Mammary epithelial cell (primary cell): ENCODE measurements at regions of chr17 and their contacts with region 1.

Region 1: GRCh38 chr17:80101011-80101945 is at the start of gene GAA:
- DNase-seq: peak; percentile 65
- H3K4me3 ChIP-seq: peak within 1 kb of the TSS; percentile 50 to 98 (median 86)
- H3K27ac ChIP-seq: peak within 1 kb of the TSS; percentile 51
- H3K4me1 ChIP-seq: peaks cover 32% of the 10 kb centered on the region
- H3K27me3 ChIP-seq: no peaks in the 10 kb centered on the region
- CTCF ChIP-seq: peak; percentile 52 to 64
- total RNA-seq, gene GAA: 32.2 to 230 TPM

Region 2: GRCh38 chr17:80124351-80124981 is 23.2 kb after region 1 on chr17:
- CTCF ChIA-PET with region 1: interaction called, 8 read pairs
- dilution Hi-C with region 1: no loop called
- in situ Hi-C with region 1: no loop called
- intact Hi-C with region 1: loop called (anchors 1 kb)
- DNase-seq: peak; percentile 76
- H3K4me3 ChIP-seq: no peak overlapping the region
- H3K27ac ChIP-seq: peak overlapping the region; percentile 16
- H3K4me1 ChIP-seq: peaks cover 26% of the 10 kb centered on the region
- H3K27me3 ChIP-seq: no peaks in the 10 kb centered on the region
- CTCF ChIP-seq: peak; percentile 33 to 56

Region 3: DNA sequence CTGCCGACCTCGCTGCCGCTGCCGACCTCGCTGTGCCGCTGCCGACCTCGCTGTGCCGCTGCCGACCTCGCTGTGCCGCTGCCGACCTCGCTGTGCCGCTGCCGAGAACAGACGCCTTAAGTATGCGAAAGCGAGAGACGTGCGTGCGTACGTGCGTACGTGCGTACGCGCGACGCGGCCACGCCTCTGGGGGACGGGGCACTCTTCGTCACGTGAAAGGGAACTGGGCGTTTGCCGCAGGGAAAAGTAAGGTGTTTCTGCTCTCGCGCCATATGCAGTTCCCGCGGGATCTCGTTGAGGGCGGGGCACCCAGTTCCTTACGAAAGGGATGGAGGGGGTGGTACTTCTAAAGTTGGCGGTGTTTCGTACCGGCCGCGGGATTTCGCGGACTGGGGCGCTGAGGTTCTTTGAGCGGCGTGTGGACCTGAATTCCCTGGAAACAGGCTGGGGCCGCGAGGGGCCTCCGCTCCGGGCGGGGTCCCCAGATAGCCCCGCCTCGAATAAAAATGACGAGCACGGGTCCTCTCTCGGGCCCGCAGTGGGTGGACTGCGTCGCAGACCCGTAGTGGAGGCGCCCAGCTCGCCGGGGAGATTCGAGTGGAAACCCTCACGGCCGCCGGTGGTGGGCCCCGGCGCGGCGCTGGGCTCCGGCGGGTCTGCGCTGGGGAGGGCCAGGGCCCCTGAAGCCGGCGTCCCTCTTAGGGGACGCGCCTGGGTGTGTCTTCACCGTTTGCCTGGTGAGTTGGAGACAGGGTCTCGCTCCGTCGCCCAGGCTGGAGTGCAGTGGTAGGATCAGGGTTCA is 46.0 kb after region 1 on chr17 and contains the start of gene EIF4A3:
- CTCF ChIA-PET with region 1: interaction called, 5 read pairs
- dilution Hi-C with region 1: loop called (anchors 5 kb)
- in situ Hi-C with region 1: no loop called
- intact Hi-C with region 1: loop called (anchors 1 kb)
- DNase-seq: peak; percentile 98
- H3K4me3 ChIP-seq: peak within 1 kb of the TSS; percentile 78 to 96 (median 82)
- H3K27ac ChIP-seq: peak within 1 kb of the TSS; percentile 81
- H3K4me1 ChIP-seq: peaks cover 14% of the 10 kb centered on the region
- H3K27me3 ChIP-seq: no peaks in the 10 kb centered on the region
- CTCF ChIP-seq: peak in 1 of 2 donors; percentile 6
- total RNA-seq, gene EIF4A3: 79.7 to 86.4 TPM

Region 4: GRCh38 chr17:80219013-80219762 is 117.9 kb after region 1 on chr17:
- CTCF ChIA-PET with region 1: interaction called, 3 read pairs
- dilution Hi-C with region 1: no loop called
- in situ Hi-C with region 1: no loop called
- intact Hi-C with region 1: loop called (anchors 1 kb)
- DNase-seq: peak; percentile 82
- H3K4me3 ChIP-seq: peak overlapping the region; percentile 27 to 70 (median 59)
- H3K27ac ChIP-seq: no peak overlapping the region
- H3K4me1 ChIP-seq: peaks cover 12% of the 10 kb centered on the region
- H3K27me3 ChIP-seq: no peaks in the 10 kb centered on the region
- CTCF ChIP-seq: no peak

Region 5: DNA sequence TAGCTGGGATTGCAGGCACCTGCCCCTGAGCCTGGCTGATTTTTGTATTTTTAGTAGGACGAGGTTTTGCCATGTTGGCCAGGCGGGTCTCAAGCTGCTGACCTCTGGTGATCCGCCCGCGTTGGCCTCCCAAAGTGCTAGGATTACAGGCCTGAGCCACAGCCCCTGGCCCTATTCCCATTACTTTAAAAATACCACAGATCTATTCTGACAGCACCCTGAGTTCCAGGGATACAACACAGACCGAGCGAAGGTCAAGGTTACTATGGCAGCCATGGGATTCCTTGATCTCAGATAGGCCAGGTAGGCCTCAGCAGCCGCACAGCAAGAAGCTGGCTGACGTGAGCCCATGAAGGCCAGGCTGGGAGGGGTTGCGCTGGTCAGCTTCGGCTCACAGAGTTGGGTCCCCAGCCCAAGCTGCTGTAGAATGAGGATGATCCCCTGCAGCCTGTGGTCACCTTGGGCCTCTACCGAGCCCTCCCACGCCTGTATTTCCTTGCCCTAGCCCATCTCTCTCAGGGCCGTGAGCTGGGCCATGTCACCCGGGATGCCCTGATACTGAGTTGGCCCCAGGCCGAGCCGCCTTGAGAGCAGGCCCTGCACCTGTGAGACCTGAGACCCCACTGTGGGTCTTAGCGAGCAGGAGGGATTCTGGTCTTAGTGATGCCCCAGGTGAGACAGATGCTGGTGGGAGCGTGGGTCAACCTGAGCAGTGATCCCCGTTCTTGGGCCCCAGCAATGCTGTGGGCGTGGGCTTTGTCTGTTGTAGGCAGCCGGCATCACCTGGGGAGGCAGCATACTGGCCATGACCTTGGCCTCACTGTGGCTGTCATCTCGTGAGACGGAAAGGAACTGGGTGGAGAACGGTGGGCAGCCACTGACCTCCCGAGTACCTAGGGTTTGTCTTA is 142.5 kb after region 1 on chr17:
- CTCF ChIA-PET with region 1: no interaction called
- dilution Hi-C with region 1: no loop called
- in situ Hi-C with region 1: no loop called
- intact Hi-C with region 1: no loop called
- DNase-seq: no peak
- H3K4me3 ChIP-seq: no peak overlapping the region
- H3K27ac ChIP-seq: no peak overlapping the region
- H3K4me1 ChIP-seq: no peaks in the 10 kb centered on the region
- H3K27me3 ChIP-seq: no peaks in the 10 kb centered on the region
- CTCF ChIP-seq: no peak

Region 6: GRCh38 chr17:80364216-80364618 is 262.9 kb after region 1 on chr17:
- CTCF ChIA-PET with region 1: no interaction called
- dilution Hi-C with region 1: no loop called
- in situ Hi-C with region 1: no loop called
- intact Hi-C with region 1: loop called (anchors 5 kb)
- DNase-seq: no peak
- H3K4me3 ChIP-seq: no peak overlapping the region
- H3K27ac ChIP-seq: no peak overlapping the region
- H3K4me1 ChIP-seq: peaks cover 13% of the 10 kb centered on the region
- H3K27me3 ChIP-seq: no peaks in the 10 kb centered on the region
- CTCF ChIP-seq: peak; percentile 41 to 53